ENCODE measurements at regions of chr1 and their contacts with region 1.

Region 1: GRCh38 chr1:25997828-25998761 is at the start of gene PAFAH2:
- DNase-seq: peak; percentile 100
- H3K4me3 ChIP-seq: peak within 1 kb of the TSS; percentile 66
- H3K27ac ChIP-seq: peak within 1 kb of the TSS; percentile 79
- H3K4me1 ChIP-seq: peaks cover 13% of the 10 kb centered on the region
- H3K27me3 ChIP-seq: no peaks in the 10 kb centered on the region
- CTCF ChIP-seq: peak; percentile 98
- total RNA-seq, gene PAFAH2: 6.7 and 7.2 TPM in 2 replicates

Region 2: DNA sequence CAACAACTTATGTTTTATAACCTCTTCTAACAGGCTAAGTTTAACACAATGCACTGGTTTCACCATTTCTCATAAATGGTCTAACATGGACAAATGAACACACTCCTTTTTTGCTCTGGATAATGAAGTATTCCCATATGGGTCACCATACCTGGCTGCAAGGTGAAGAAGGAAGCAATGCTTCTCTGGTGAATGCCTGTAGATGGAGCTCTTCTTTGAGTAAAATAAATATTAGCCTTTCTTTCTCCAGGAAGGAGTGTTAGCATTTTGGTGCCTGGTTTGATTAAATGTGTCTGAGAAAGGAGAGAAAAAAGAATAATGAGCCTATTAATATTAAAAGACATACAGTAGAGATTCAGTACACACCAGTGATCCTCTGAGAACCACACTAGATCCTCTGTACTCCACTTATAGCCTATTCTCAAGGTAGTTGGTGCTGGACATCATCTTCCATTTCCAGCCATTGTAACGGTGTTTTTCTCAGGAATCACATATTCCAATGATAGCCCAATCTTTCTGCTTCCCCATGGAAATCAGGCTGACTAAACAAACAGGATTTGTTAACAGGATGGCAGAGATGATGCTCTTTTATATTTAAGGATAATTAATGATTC is 160.7 kb before region 1 on chr1:
- CTCF ChIA-PET with region 1: no interaction called
- POLR2A ChIA-PET with region 1: no interaction called
- intact Hi-C with region 1: loop called (anchors 10 kb)
- DNase-seq: no peak
- H3K4me3 ChIP-seq: no peak overlapping the region
- H3K27ac ChIP-seq: no peak overlapping the region
- H3K4me1 ChIP-seq: peaks cover 11% of the 10 kb centered on the region
- H3K27me3 ChIP-seq: no peaks in the 10 kb centered on the region
- CTCF ChIP-seq: peak; percentile 46

Region 3: GRCh38 chr1:25895365-25895993 is 102.6 kb before region 1 on chr1:
- CTCF ChIA-PET with region 1: interaction called, 34 read pairs
- POLR2A ChIA-PET with region 1: interaction called, 7 read pairs
- intact Hi-C with region 1: loop called (anchors 1 kb)
- DNase-seq: peak; percentile 96
- H3K4me3 ChIP-seq: no peak overlapping the region
- H3K27ac ChIP-seq: peak overlapping the region; percentile 40
- H3K4me1 ChIP-seq: peaks cover 37% of the 10 kb centered on the region
- H3K27me3 ChIP-seq: no peaks in the 10 kb centered on the region
- CTCF ChIP-seq: peak; percentile 99

Measured in A673 (cell line).